CD8-positive, alpha-beta T cell (primary cell): ENCODE measurements at regions of chr3 and their contacts with region 1.

Region 1: GRCh38 chr3:191376516-191377141 is 46.3 kb upstream of the UTS2B start:
- DNase-seq: no peak
- ATAC-seq: no peak
- H3K4me3 ChIP-seq: no peak overlapping the region
- H3K4me3 Mint-ChIP-seq: no peak overlapping the region
- H3K27ac ChIP-seq: no peak overlapping the region
- H3K27ac Mint-ChIP-seq: no peak overlapping the region
- H3K4me1 ChIP-seq: no peaks in the 10 kb centered on the region
- H3K4me1 Mint-ChIP-seq: no peaks in the 10 kb centered on the region
- H3K27me3 ChIP-seq: no peaks in the 10 kb centered on the region
- H3K27me3 Mint-ChIP-seq: no peaks in the 10 kb centered on the region
- CTCF ChIP-seq: no peak

Region 2: GRCh38 chr3:191358929-191359328 is 17.7 kb before region 1 on chr3:
- CTCF ChIA-PET with region 1: no interaction called
- POLR2A ChIA-PET with region 1: no interaction called
- intact Hi-C with region 1: loop called in 1 of 2 experiments (anchors 1 kb)
- DNase-seq: no peak
- ATAC-seq: no peak
- H3K4me3 ChIP-seq: no peak overlapping the region
- H3K4me3 Mint-ChIP-seq: no peak overlapping the region
- H3K27ac ChIP-seq: no peak overlapping the region
- H3K27ac Mint-ChIP-seq: no peak overlapping the region
- H3K4me1 ChIP-seq: no peaks in the 10 kb centered on the region
- H3K4me1 Mint-ChIP-seq: no peaks in the 10 kb centered on the region
- H3K27me3 ChIP-seq: no peaks in the 10 kb centered on the region
- H3K27me3 Mint-ChIP-seq: no peaks in the 10 kb centered on the region
- CTCF ChIP-seq: no peak

Region 3: GRCh38 chr3:191388823-191389222 is 12.2 kb after region 1 on chr3:
- CTCF ChIA-PET with region 1: no interaction called
- POLR2A ChIA-PET with region 1: no interaction called
- intact Hi-C with region 1: no loop called
- DNase-seq: no peak
- ATAC-seq: no peak
- H3K4me3 ChIP-seq: no peak overlapping the region
- H3K4me3 Mint-ChIP-seq: no peak overlapping the region
- H3K27ac ChIP-seq: no peak overlapping the region
- H3K27ac Mint-ChIP-seq: no peak overlapping the region
- H3K4me1 ChIP-seq: no peaks in the 10 kb centered on the region
- H3K4me1 Mint-ChIP-seq: no peaks in the 10 kb centered on the region
- H3K27me3 ChIP-seq: no peaks in the 10 kb centered on the region
- H3K27me3 Mint-ChIP-seq: no peaks in the 10 kb centered on the region
- CTCF ChIP-seq: no peak

Region 4: DNA sequence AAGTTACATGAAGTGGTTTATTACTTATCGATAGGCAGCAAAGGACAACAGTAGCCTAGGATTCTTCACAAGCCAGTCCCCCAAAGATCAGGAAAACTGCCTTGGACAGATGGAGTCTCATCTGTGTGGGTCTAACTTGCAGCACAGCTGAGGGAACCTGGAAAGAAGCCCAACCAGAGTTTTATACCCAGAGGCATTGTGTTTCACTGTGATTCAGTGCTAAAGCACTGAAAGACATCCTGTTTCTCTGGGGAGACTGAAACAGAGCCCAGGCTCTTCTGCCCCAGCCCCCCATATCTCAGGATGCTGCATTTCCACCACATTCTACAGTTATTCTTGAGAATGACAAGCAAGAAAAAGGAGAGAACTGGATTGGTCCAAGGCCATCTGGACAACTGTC is 36.1 kb after region 1 on chr3:
- CTCF ChIA-PET with region 1: no interaction called
- POLR2A ChIA-PET with region 1: no interaction called
- intact Hi-C with region 1: no loop called
- DNase-seq: no peak
- ATAC-seq: no peak
- H3K4me3 ChIP-seq: no peak overlapping the region
- H3K4me3 Mint-ChIP-seq: no peak overlapping the region
- H3K27ac ChIP-seq: no peak overlapping the region
- H3K27ac Mint-ChIP-seq: no peak overlapping the region
- H3K4me1 ChIP-seq: no peaks in the 10 kb centered on the region
- H3K4me1 Mint-ChIP-seq: no peaks in the 10 kb centered on the region
- H3K27me3 ChIP-seq: no peaks in the 10 kb centered on the region
- H3K27me3 Mint-ChIP-seq: no peaks in the 10 kb centered on the region
- CTCF ChIP-seq: no peak

Region 5: DNA sequence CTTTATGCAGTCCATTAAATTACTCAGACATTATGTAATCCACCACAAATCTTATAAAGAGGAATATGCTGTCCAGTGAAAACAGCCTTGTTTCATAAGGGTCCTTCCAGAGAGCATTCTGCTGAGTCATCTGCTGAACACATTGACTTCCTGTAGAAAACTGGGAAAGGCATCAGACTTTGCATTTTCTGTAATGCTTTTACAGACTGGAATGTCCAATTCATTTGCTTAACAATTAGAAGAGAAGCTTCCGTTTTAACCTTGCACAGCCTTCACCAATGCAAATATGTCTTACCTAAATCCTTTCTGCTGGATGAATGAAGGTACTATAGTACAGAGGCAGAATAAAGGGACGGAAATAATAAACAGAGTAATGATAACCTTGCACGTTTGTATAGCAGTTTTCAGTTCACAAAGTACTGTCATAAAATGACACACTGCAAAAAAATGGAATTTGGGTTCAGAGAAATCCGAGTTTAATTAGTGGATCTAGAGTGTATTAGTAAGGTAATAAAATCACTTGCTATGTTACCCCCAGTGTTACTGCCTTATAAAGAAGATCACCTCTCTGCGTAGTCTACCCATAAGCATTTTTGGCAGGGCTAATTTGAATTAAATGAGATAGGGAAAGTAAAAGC is 385.8 kb after region 1 on chr3:
- CTCF ChIA-PET with region 1: no interaction called
- POLR2A ChIA-PET with region 1: no interaction called
- intact Hi-C with region 1: no loop called
- DNase-seq: no peak
- ATAC-seq: no peak
- H3K4me3 ChIP-seq: no peak overlapping the region
- H3K4me3 Mint-ChIP-seq: no peak overlapping the region
- H3K27ac ChIP-seq: no peak overlapping the region
- H3K27ac Mint-ChIP-seq: no peak overlapping the region
- H3K4me1 ChIP-seq: no peaks in the 10 kb centered on the region
- H3K4me1 Mint-ChIP-seq: no peaks in the 10 kb centered on the region
- H3K27me3 ChIP-seq: no peaks in the 10 kb centered on the region
- H3K27me3 Mint-ChIP-seq: no peaks in the 10 kb centered on the region
- CTCF ChIP-seq: no peak